Mammary epithelial cell (primary cell): ENCODE measurements at regions of chr20 and their contacts with region 1.

Region 1: DNA sequence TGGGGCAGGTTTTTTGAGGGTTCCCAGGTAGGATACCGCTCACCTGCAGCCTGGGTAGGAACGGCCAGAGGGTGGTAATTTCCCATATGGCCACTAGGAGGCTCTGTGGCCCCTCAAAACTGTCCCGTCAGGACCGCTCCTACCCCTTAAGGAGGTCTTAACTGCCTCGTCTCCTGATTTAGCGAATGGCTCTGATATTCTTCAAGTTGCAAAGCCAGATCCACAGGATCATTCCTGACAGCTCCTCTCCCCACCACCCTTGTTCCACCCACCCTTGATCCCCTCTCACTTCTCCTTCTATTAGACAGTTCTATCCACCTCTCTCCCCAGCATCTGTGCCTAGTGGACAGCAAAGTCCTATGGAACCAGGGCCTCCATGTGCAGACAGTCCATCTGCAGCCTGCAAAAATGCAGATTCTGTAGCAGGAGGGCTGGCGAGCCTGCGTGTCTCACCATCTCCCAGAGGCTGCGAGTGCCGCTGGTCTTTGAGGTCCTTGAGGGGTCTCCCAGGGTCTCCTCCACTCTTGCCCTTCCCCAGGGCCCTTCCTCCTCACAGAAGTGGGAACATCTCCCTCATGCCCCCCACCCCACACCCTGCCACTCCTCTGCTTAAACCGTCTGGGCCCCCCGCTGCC is 34.3 kb upstream of the ZBP1 start:
- DNase-seq: peak; percentile 38
- H3K4me3 ChIP-seq: no peak overlapping the region
- H3K27ac ChIP-seq: no peak overlapping the region
- H3K4me1 ChIP-seq: peaks cover 26% of the 10 kb centered on the region
- H3K27me3 ChIP-seq: no peaks in the 10 kb centered on the region
- CTCF ChIP-seq: peak; percentile 81 to 85

Region 2: DNA sequence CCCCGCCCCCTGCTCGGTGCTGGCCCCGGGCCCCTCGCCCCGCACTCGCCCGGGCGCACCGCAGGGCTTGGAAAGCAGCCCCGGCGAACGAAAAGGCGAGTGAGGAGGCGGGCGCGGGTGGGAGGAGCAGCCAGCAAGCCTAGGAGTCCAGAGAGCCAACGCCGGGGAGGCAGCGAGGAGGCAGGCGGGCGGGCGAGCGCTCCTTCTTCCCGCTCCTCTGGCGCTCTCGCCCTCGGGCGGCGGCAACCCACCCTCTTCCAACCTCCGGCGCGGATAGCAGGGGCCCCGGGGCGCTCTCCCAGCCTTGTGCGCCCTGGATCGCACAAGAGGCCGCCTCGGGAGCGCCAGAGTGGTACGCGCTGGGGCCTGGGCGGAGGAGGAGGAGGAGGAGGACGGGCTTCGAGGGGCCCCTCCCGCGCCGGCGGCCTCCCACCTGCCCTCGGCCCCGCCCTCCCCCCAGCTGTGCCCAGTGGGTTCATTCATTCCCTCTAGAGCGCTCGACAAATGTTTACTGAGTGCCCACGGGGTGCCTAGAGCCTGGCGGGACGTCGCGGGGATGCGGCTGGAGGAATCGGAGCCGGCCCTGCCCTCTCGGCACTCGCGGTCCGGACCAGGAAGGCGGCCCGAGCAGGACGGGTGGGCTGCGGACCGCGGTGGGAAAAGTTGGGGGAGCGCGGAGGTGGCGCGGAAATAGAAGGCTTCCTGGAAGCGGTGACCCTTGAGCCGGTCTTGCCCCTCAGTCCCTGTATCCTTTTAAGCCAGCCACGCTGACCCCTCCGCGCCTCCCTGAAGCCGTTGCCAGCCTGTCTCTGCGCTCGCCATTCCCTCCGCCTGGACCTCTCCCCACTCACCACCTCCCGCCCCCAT is 388.0 kb before region 1 on chr20 and contains the start of gene BMP7:
- CTCF ChIA-PET with region 1: no interaction called
- dilution Hi-C with region 1: no loop called
- in situ Hi-C with region 1: no loop called
- intact Hi-C with region 1: no loop called
- DNase-seq: peak; percentile 33
- H3K4me3 ChIP-seq: peak within 1 kb of the TSS in 2 of 3 experiments; percentile 25 to 27
- H3K27ac ChIP-seq: no peak within 1 kb of the TSS
- H3K4me1 ChIP-seq: peaks cover 5% of the 10 kb centered on the region
- H3K27me3 ChIP-seq: peaks cover 33% of the 10 kb centered on the region
- CTCF ChIP-seq: no peak
- total RNA-seq, gene BMP7: 2.0 TPM in 1 of 2 donors, not detected in the other

Region 3: DNA sequence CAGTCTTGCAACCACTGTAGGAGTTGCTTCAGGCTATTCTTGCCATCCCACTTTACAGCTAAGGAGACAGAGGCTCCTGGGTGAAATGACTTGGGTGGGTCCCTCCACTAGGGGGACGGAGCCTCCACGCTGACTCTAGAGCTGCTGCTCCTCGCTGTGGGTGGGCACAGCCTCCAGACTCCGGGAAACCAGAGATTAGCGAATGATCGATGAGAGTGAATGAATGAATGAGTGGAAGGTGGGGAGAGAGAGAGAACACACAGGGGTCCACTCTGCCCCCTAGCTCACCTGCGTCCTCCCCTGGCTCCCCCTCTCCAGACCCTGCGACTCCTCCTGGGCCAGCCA is 44.6 kb before region 1 on chr20:
- CTCF ChIA-PET with region 1: no interaction called
- dilution Hi-C with region 1: loop called (anchors 5 kb)
- in situ Hi-C with region 1: no loop called
- intact Hi-C with region 1: no loop called
- DNase-seq: no peak
- H3K4me3 ChIP-seq: no peak overlapping the region
- H3K27ac ChIP-seq: no peak overlapping the region
- H3K4me1 ChIP-seq: no peaks in the 10 kb centered on the region
- H3K27me3 ChIP-seq: peaks cover 7% of the 10 kb centered on the region
- CTCF ChIP-seq: no peak

Region 4: DNA sequence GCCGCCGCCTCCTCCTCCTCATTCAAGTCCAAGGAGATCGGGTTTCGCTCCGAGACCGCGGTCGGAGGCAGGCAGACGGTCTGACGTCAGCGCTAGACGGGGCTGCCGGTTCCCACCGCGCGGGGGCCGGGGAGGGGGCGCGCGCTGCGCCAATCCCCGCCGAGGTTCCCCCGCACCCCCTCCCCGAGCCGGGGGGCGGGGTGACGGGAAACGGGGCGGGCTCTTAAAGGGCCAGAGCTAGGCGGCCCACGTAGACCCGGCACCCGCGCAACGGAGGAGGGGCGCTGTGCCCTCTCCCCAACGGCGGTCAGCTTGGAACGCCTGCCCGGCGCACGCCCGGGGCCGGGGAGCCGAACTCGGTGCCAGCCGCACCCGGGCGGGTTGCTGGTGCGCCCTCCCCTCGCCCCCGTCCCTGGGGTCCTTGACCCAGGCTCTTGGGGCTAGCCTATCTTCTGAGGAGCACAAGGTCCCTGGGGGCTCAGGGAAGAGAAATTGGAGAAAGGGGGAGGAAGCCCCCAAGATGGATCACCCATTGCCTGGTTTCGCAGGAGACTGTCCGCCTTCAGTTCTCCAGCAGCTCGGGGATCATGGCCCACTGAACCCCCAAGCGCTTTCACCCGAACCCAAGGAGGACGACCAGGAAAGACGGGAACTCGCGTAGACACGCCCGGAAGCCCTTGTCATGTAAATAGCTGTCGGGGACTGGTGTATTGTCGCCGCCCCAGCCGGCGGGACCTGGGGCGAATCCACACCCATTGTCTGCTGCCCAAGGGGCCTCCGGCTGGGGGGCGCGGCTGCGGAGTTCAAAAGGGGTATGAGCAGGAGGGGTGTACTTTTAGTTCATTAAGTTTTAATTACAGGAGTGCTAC is 55.7 kb after region 1 on chr20 and contains the start of gene PMEPA1:
- CTCF ChIA-PET with region 1: no interaction called
- dilution Hi-C with region 1: no loop called
- in situ Hi-C with region 1: no loop called
- intact Hi-C with region 1: loop called (anchors 2 kb)
- DNase-seq: peak; percentile 97
- H3K4me3 ChIP-seq: peak within 1 kb of the TSS; percentile 85 to 94 (median 92)
- H3K27ac ChIP-seq: peak within 1 kb of the TSS; percentile 91
- H3K4me1 ChIP-seq: peaks cover 54% of the 10 kb centered on the region
- H3K27me3 ChIP-seq: no peaks in the 10 kb centered on the region
- CTCF ChIP-seq: no peak
- total RNA-seq, gene PMEPA1: 100 to 108 TPM

Region 5: GRCh38 chr20:57810511-57811373 is 156.3 kb after region 1 on chr20:
- CTCF ChIA-PET with region 1: no interaction called
- dilution Hi-C with region 1: no loop called
- in situ Hi-C with region 1: loop called in 1 of 2 experiments (anchors 10 kb)
- intact Hi-C with region 1: no loop called
- DNase-seq: peak; percentile 73
- H3K4me3 ChIP-seq: no peak overlapping the region
- H3K27ac ChIP-seq: no peak overlapping the region
- H3K4me1 ChIP-seq: peaks cover 19% of the 10 kb centered on the region
- H3K27me3 ChIP-seq: no peaks in the 10 kb centered on the region
- CTCF ChIP-seq: no peak

Region 6: DNA sequence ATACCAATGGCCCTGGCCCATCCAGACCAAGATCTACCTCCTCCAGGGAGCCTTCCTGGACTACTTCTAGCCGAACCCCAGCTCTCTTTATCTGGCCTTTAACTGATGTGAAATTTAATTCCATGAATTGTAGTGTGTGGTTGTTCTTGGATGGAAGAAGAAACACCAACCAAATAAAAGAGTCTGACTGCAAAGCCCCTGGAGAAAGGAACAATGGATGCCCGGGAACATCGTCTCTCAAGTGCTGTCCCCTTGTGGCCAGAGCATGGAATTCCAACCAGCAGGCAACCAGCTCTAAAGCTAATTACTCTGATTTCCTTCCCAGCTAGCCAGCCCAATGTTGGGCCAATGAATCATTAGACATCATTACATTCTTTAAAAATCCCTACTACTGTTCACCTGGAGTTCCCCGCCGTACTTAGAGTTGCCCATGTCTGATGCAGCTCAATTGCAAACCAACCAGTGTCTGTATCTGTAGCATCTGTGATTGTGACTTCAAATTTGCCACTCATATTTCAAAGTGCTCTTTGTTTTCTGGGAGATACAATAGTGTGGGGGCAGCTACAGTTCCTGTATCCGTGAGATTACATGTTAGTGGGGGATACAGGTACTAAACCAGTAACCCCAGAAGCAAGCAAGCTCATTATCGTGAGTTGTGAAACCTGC is 432.8 kb after region 1 on chr20:
- CTCF ChIA-PET with region 1: interaction called, 3 read pairs
- dilution Hi-C with region 1: no loop called
- in situ Hi-C with region 1: no loop called
- intact Hi-C with region 1: loop called (anchors 1 kb)
- DNase-seq: peak; percentile 76
- H3K4me3 ChIP-seq: no peak overlapping the region
- H3K27ac ChIP-seq: no peak overlapping the region
- H3K4me1 ChIP-seq: peaks cover 15% of the 10 kb centered on the region
- H3K27me3 ChIP-seq: no peaks in the 10 kb centered on the region
- CTCF ChIP-seq: peak; percentile 96 to 99